ENCODE measurements at regions of chr1 and their contacts with region 1.

Region 1: DNA sequence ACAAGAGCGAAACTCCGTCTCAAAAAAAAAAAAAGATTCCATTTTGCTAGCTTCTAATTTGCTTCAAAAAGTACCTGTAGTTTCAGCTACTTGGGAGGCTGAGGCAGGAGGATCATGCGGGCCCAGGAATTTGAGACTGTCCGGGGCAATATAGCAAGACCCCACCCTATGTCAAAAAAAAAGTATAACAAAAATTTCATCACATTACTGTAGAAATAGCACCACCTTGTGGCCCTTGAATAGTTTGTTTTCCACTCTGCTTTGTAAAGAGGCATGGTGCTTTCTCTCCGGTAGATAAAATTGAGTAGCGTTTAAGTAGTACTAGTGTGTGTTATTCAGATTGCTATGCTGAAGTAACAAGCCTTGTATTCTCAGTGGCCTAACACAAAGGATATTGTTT is 18.2 kb upstream of the MSTO1 start:
- DNase-seq: no peak
- ATAC-seq: peak; percentile 37 to 81 (median 71)
- H3K4me3 ChIP-seq: no peak overlapping the region
- H3K27ac ChIP-seq: no peak overlapping the region
- H3K4me1 ChIP-seq: no peaks in the 10 kb centered on the region
- H3K27me3 ChIP-seq: no peaks in the 10 kb centered on the region
- CTCF ChIP-seq: peak; percentile 62

Region 2: GRCh38 chr1:155250633-155251449 is 340.9 kb before region 1 on chr1:
- intact Hi-C with region 1: loop called (anchors 1 to 5 kb)
- DNase-seq: peak; percentile 93 to 96
- ATAC-seq: peak; percentile 84 to 91 (median 88)
- H3K4me3 ChIP-seq: peak overlapping the region; percentile 40
- H3K27ac ChIP-seq: no peak overlapping the region
- H3K4me1 ChIP-seq: peaks cover 14% of the 10 kb centered on the region
- H3K27me3 ChIP-seq: no peaks in the 10 kb centered on the region
- CTCF ChIP-seq: peak; percentile 99

Region 3: DNA sequence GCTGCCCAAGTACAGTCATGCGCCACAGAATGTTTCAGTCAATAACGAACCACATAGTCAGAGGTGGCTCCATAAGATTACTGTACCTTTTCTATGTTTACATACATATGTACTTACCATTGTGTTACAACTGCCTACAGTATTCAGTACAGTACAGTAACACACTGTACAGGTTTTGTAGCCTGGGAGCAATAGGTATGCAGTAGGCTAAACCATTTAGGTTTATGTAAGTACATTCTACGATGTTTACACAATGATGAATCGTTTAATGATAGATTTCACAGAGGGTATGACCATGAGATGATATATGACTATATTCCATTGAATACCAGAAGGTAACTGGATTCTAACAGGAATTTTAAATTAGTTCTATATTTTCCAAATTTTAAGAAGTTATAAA is 86.3 kb after region 1 on chr1:
- intact Hi-C with region 1: no loop called
- DNase-seq: no peak
- ATAC-seq: no peak
- H3K4me3 ChIP-seq: no peak overlapping the region
- H3K27ac ChIP-seq: no peak overlapping the region
- H3K4me1 ChIP-seq: no peaks in the 10 kb centered on the region
- H3K27me3 ChIP-seq: no peaks in the 10 kb centered on the region
- CTCF ChIP-seq: no peak

Measured in psoas muscle (tissue), 8 donors.